ENCODE measurements at regions of chr7 and their contacts with region 1.

Region 1: GRCh38 chr7:37388811-37389210 is 59.9 kb downstream of the ELMO1 start:
- DNase-seq: no peak
- H3K4me3 Mint-ChIP-seq: no peak overlapping the region
- H3K27ac Mint-ChIP-seq: no peak overlapping the region
- H3K4me1 Mint-ChIP-seq: peaks cover 47% of the 10 kb centered on the region
- H3K27me3 Mint-ChIP-seq: no peaks in the 10 kb centered on the region

Region 2: DNA sequence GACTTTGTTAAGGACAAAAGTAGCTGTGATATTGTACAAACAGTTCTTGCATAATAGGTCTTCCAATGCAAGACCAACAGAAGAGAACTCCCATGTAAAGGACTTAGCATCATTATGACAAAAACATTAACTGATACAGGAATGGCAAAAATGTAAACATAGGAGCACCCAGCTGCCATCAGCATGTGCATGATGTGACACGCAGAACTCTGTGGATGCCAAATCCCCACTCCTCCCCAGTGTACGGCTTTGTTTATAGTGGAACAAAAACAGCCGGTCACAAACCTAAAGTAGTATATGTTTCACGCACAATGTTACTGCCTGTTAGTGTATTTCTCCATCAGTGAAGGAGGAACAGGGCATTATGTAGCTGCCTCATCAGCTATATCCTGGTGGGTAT is 348.5 kb before region 1 on chr7:
- CTCF ChIA-PET with region 1: no interaction called
- POLR2A ChIA-PET with region 1: no interaction called
- intact Hi-C with region 1: no loop called
- DNase-seq: no peak
- H3K4me3 Mint-ChIP-seq: no peak overlapping the region
- H3K27ac Mint-ChIP-seq: no peak overlapping the region
- H3K4me1 Mint-ChIP-seq: no peaks in the 10 kb centered on the region
- H3K27me3 Mint-ChIP-seq: no peaks in the 10 kb centered on the region

Region 3: GRCh38 chr7:37365405-37365804 is 23.4 kb before region 1 on chr7:
- CTCF ChIA-PET with region 1: no interaction called
- POLR2A ChIA-PET with region 1: no interaction called
- intact Hi-C with region 1: loop called (anchors 2 kb)
- DNase-seq: no peak
- H3K4me3 Mint-ChIP-seq: no peak overlapping the region
- H3K27ac Mint-ChIP-seq: peak overlapping the region; percentile 98
- H3K4me1 Mint-ChIP-seq: peaks cover 86% of the 10 kb centered on the region
- H3K27me3 Mint-ChIP-seq: no peaks in the 10 kb centered on the region

Measured in activated CD4-positive, alpha-beta memory T cell treated with anti-CD3 and anti-CD28 coated beads for 36 hours (primary cell).